ENCODE measurements at regions of chr17 and their contacts with region 1.

Region 1: GRCh38 chr17:45218895-45219661 is 2.6 kb upstream of the FMNL1 start:
- DNase-seq: peak; percentile 90
- ATAC-seq: peak; percentile 80

Region 2: DNA sequence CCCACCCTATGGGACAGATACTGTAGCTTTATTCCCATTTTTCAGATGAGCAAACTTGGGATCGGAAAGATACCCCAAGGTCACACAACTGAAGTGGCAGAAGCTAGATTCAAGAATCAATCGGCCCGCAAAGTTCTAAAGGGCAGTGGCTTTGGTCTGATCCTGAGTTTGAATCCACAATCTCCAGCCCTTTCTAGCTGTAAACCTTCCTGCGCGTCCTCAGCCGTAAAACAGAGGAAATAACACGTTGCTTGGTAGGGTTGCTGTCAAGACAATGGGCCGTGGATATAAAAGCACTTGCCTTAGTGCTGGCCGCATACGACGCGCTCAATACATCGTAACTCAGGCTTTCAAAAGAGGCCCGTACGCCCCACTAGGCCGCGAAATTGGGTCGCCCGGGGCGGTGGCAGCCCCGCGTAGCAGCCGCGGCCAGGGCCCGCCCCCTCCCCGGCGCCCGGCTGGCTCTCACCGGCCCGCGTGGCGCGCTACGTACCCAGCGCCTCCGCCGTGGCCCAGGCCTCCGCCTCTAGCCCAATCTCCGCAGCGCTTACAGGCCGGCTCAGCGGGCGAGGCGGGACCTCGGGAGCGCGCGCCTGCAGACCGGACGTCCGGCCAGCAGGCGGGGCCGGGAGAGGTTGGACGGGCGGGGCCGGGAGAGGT is 167.9 kb before region 1 on chr17 and contains the start of gene DCAKD:
- intact Hi-C with region 1: no loop called
- DNase-seq: peak; percentile 98
- ATAC-seq: peak; percentile 99
- total RNA-seq, gene DCAKD: 24.2 TPM

Region 3: GRCh38 chr17:45235416-45236281 is 16.6 kb after region 1 on chr17:
- intact Hi-C with region 1: loop called (anchors 1 kb)
- DNase-seq: peak; percentile 88
- ATAC-seq: peak; percentile 49

Region 4: GRCh38 chr17:45261577-45262515 is 42.8 kb after region 1 on chr17 and contains the start of gene SPATA32:
- intact Hi-C with region 1: loop called (anchors 5 kb)
- DNase-seq: peak; percentile 86
- ATAC-seq: peak; percentile 30
- total RNA-seq, gene SPATA32: not detected

Region 5: GRCh38 chr17:45277216-45277849 is 58.3 kb after region 1 on chr17:
- intact Hi-C with region 1: loop called (anchors 5 kb)
- DNase-seq: peak; percentile 98
- ATAC-seq: peak; percentile 71

Region 6: DNA sequence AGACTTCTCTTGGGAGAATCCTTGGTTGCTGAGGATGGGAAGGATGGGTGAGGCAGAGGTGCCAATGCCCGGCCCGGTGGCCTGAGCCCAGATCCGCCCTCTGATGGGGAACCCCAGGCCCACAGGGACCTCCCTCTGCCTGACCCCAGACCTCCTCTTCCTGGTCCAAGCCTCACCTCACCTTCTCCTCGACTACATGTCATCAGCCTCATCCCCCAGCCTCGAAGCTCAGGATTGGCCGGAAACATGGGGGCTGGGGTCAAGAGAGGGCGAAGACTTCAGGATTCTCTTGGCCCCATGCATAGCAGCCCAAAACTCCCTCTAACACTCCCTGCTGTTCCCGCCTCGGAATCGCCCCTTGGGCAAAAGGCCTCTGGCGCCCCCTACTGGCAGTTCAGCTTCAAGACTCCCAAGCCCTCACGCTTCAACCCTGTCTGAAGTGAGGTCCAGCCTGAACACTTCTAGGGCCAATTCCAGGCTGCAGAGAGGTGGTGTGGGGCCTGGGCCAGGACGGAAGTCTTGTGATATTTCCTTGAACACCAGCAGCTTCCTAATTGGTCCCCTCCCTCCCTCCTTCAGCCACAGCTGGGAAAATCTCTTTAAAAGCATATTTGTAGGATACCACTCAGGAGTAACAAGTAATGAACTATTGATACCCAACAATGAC is 166.4 kb after region 1 on chr17:
- intact Hi-C with region 1: loop called (anchors 1 kb)
- DNase-seq: peak; percentile 95
- ATAC-seq: peak; percentile 93